ENCODE measurements at regions of chr10 and their contacts with region 1.

Region 1: DNA sequence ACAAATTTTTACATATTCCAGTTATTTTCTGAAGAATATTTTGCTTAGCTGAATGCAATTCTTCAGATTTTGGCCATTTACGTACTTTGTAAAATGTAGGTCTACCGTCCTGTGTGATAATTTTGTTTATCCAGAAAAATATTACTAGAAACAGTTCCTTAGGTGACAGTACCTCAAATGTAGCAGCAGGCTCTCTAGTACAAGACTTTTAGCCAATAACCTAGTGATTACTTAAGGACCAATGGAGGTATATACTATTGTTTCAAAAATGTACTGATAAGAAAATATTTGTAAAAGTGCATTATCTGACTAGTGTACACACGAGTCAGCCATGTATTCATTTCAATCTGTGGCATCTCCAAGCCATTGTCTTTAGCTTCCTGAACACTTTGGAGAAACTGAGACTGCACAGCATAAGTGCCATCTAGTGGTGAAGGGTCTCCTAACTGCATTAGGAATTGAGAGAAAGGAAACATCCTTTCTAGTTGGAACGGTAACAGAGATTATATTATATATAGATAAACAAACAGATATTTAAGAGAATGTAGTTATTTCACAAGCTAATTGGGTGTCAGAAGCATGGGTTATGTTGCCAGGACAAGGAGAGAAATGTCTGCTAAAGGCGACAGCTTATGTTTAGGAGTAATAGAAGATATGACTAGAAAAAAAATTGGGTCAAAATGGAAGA is 23.7 kb downstream of the RTKN2 start:
- DNase-seq: peak; percentile 99
- ATAC-seq: peak; percentile 42
- H3K4me3 ChIP-seq: no peak overlapping the region
- H3K27ac ChIP-seq: peak overlapping the region; percentile 3
- H3K4me1 ChIP-seq: peaks cover 60% of the 10 kb centered on the region
- H3K27me3 ChIP-seq: no peaks in the 10 kb centered on the region
- CTCF ChIP-seq: peak; percentile 100

Region 2: GRCh38 chr10:60816628-60817397 is 1428.1 kb before region 1 on chr10:
- CTCF ChIA-PET with region 1: no interaction called
- POLR2A ChIA-PET with region 1: no interaction called
- intact Hi-C with region 1: loop called (anchors 5 kb)
- DNase-seq: peak; percentile 97
- ATAC-seq: peak; percentile 93
- H3K4me3 ChIP-seq: no peak overlapping the region
- H3K27ac ChIP-seq: no peak overlapping the region
- H3K4me1 ChIP-seq: peaks cover 6% of the 10 kb centered on the region; the same call in 1 of the 2 replicates
- H3K27me3 ChIP-seq: no peaks in the 10 kb centered on the region
- CTCF ChIP-seq: peak; percentile 100

Region 3: DNA sequence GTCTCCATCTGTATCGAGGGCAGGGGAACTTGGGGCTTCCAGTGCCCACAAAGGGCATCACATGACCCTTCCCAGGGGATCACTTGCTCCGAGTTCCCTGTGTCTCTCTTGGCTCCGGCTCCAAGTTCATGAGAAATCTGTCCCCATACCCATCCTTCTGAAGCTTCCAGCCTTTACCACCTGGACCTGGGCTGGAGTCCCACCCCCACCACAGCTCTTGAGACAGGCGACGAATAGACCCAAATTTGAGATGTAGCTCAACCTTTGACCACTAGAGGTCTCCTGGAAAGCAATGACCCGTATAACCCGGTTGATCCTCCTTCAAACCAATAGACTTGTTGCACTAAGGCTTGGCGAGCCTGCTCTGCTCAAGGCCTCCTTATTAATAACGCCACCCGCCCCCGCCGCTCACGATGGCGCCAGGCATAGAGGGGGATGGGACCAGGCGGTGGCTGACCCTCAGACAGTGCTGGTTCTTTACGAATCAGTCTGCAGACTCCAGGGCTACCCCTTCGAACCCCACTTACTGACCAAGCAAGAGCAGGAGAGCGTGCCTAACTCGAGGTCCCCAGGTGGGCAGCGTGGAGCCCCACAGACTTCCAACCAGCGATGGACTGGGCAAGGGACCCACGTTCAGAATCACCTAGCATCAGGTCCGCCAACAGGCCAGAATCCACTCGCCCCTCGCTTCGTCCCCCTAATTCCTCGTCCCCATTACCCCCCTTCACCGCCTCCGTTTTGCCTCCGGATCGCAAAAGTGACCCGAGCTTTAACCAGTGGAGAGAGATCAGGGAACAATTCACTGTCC is 347.9 kb before region 1 on chr10:
- CTCF ChIA-PET with region 1: interaction called, 6 read pairs
- POLR2A ChIA-PET with region 1: interaction called, 11 read pairs
- intact Hi-C with region 1: loop called (anchors 1 kb)
- DNase-seq: peak; percentile 91
- ATAC-seq: no peak; the same call in 1 of the 2 replicates
- H3K4me3 ChIP-seq: no peak overlapping the region
- H3K27ac ChIP-seq: no peak overlapping the region
- H3K4me1 ChIP-seq: peaks cover 38% of the 10 kb centered on the region
- H3K27me3 ChIP-seq: no peaks in the 10 kb centered on the region
- CTCF ChIP-seq: peak; percentile 99

Region 4: DNA sequence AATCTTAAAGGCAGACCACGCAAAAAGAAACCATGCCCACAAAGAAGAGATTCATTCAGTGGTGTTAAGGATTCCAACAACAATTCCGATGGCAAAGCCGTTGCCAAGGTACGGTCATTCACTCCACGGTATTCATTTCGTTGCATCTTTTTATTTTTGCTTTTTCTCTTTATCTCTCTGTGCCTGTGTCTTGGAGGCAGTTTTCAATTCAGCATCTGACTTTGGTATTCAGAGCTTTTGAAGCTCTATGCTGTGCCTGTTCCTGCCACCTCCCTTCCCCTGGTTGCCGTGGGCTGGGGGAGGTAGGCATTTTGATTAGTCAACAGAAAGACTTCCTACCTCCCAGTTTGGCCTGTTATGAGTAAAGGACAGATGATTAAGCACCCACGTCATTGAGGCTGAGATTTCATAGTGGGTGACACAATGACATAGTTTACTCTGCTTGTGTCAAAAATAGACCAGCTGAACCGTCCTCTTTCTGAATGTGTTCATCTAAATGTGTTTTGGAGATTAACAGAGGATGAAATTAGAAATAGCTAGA is 194.0 kb before region 1 on chr10:
- CTCF ChIA-PET with region 1: interaction called, 5 read pairs
- POLR2A ChIA-PET with region 1: interaction called, 7 read pairs
- intact Hi-C with region 1: loop called (anchors 1 kb)
- DNase-seq: peak; percentile 100
- ATAC-seq: peak; percentile 41
- H3K4me3 ChIP-seq: peak overlapping the region; percentile 63
- H3K27ac ChIP-seq: peak overlapping the region; percentile 77
- H3K4me1 ChIP-seq: peaks cover 60% of the 10 kb centered on the region
- H3K27me3 ChIP-seq: no peaks in the 10 kb centered on the region
- CTCF ChIP-seq: no peak

Region 5: DNA sequence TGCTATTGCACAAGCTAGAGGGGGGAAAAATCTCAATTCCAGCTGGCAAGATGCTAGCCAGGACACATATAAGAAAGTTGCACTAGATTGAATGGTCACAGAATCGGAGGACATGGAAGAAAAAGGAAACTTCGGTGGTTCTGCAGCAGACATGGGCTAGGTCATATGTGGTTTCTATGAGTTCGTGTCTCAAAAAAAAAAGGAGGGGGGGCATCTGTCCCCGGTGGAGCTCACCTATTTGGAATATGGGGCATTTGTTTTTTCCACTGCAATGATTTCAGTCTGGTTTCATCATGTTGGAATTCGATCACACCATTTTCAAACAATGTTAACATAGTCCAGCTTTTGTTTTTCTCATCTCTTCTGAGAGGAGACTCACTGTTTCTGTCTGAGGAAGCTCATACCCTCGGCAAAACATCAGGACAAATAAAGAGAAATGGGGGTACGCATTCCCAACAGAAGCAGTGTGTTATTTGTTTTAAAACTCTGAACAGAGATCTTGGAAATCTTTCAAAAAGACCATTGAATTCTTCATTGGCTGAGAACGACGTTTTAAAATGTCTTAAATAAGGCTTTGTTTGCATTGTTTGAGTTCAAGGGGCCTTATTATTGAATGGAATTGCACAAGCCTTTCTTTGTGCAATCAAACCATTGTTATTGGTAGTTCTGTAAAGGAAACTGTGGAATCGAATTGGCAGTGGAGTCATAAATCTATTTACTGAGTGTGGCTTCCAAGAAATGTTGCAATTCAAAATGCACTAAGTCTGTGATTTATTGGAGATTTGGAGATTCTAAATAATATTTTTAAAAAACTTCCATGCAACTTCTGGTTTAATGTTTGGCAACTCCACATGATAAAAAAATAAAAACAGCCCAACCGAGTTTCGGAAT is 149.5 kb before region 1 on chr10:
- CTCF ChIA-PET with region 1: interaction called, 3 read pairs
- POLR2A ChIA-PET with region 1: no interaction called
- intact Hi-C with region 1: loop called (anchors 1 kb)
- DNase-seq: peak; percentile 97
- ATAC-seq: peak; percentile 50
- H3K4me3 ChIP-seq: peak overlapping the region; percentile 43
- H3K27ac ChIP-seq: peak overlapping the region; percentile 57
- H3K4me1 ChIP-seq: peaks cover 43% of the 10 kb centered on the region
- H3K27me3 ChIP-seq: no peaks in the 10 kb centered on the region
- CTCF ChIP-seq: no peak

Region 6: GRCh38 chr10:62153191-62153590 is 91.7 kb before region 1 on chr10:
- CTCF ChIA-PET with region 1: interaction called, 3 read pairs
- POLR2A ChIA-PET with region 1: no interaction called
- intact Hi-C with region 1: loop called (anchors 1 kb)
- DNase-seq: peak; percentile 97
- ATAC-seq: peak; percentile 77
- H3K4me3 ChIP-seq: no peak overlapping the region
- H3K27ac ChIP-seq: peak overlapping the region; percentile 59
- H3K4me1 ChIP-seq: peaks cover 18% of the 10 kb centered on the region
- H3K27me3 ChIP-seq: no peaks in the 10 kb centered on the region
- CTCF ChIP-seq: no peak

Region 7: DNA sequence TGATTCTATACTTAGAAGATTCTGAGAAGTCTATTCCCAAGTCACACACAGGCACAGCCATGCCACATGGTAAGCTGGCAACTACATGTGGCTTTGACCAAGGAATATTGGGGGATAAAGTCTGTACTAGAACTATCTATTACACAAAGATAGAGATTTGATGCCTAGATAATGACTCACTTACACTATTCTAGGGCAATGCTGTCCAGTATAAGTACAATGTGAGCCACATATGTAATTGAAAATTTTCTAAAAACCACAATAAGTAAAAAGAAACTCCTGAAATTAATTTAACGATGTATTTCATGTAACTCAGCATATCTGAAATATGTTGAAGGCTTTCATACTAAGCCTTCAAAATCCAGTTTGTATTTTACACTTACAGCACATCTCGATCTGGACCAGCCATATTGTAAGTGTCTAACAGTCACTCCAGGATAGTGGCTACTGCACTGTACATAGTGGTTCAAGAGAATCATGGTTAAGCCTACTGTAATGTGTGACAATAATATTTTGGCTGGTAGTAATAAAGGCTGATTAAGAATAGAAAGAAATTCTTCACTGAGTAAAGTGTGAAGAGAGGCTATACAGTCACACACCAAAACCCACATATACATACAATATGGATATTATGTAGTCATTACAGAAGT is 39.0 kb before region 1 on chr10:
- CTCF ChIA-PET with region 1: no interaction called
- POLR2A ChIA-PET with region 1: no interaction called
- intact Hi-C with region 1: no loop called
- DNase-seq: no peak
- ATAC-seq: no peak
- H3K4me3 ChIP-seq: no peak overlapping the region
- H3K27ac ChIP-seq: no peak overlapping the region
- H3K4me1 ChIP-seq: no peaks in the 10 kb centered on the region
- H3K27me3 ChIP-seq: no peaks in the 10 kb centered on the region
- CTCF ChIP-seq: no peak

Region 8: DNA sequence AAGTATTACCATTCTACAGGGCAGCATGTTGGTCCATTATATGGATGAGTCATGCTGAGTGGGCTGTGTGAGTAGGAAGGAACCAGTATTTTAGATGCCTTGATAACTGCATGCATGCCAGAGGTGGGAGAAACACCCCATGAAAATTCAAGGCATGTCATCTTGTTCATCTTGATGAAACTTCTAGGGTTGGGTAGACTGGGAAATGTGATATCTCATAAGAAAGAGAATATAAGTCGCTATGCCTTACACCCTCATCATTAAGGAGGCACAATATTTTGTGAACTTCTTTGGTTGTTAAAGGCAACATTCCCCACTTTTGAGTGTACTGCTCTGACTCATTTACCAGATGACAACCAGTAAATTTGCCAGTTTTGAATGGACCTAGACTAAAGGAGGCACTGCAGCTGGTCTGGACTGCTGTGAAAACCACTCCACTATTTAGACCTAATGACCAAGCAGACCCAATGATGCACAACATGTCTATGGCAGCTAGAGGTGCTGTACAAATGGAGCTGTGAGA is 177.2 kb after region 1 on chr10:
- CTCF ChIA-PET with region 1: no interaction called
- POLR2A ChIA-PET with region 1: no interaction called
- intact Hi-C with region 1: loop called (anchors 5 kb)
- DNase-seq: peak; percentile 94
- ATAC-seq: peak; percentile 69
- H3K4me3 ChIP-seq: no peak overlapping the region
- H3K27ac ChIP-seq: peak overlapping the region; percentile 4
- H3K4me1 ChIP-seq: peaks cover 26% of the 10 kb centered on the region
- H3K27me3 ChIP-seq: no peaks in the 10 kb centered on the region
- CTCF ChIP-seq: peak; percentile 51; the same call in 1 of the 2 replicates